ENCODE measurements at regions of chr16 and their contacts with region 1.

Region 1: GRCh38 chr16:4846891-4847773 is at the starts of genes GLYR1 and UBN1:
- DNase-seq: peak; percentile 98 to 100 (median 99)
- ATAC-seq: peak; percentile 90
- H3K4me3 ChIP-seq: peak within 1 kb of the TSS; percentile 95
- H3K4me3 Mint-ChIP-seq: peak within 1 kb of the TSS; percentile 93
- H3K27ac ChIP-seq: peak within 1 kb of the TSS; percentile 75 to 93
- H3K27ac Mint-ChIP-seq: peak within 1 kb of the TSS; percentile 85
- H3K4me1 ChIP-seq: peaks cover 46% of the 10 kb centered on the region
- H3K4me1 Mint-ChIP-seq: peaks cover 57% of the 10 kb centered on the region
- H3K27me3 ChIP-seq: no peaks in the 10 kb centered on the region
- H3K27me3 Mint-ChIP-seq: no peaks in the 10 kb centered on the region
- CTCF ChIP-seq: no peak
- total RNA-seq, gene GLYR1: 71.7 to 77.2 TPM
- total RNA-seq, gene UBN1: 45.7 to 45.8 TPM

Region 2: DNA sequence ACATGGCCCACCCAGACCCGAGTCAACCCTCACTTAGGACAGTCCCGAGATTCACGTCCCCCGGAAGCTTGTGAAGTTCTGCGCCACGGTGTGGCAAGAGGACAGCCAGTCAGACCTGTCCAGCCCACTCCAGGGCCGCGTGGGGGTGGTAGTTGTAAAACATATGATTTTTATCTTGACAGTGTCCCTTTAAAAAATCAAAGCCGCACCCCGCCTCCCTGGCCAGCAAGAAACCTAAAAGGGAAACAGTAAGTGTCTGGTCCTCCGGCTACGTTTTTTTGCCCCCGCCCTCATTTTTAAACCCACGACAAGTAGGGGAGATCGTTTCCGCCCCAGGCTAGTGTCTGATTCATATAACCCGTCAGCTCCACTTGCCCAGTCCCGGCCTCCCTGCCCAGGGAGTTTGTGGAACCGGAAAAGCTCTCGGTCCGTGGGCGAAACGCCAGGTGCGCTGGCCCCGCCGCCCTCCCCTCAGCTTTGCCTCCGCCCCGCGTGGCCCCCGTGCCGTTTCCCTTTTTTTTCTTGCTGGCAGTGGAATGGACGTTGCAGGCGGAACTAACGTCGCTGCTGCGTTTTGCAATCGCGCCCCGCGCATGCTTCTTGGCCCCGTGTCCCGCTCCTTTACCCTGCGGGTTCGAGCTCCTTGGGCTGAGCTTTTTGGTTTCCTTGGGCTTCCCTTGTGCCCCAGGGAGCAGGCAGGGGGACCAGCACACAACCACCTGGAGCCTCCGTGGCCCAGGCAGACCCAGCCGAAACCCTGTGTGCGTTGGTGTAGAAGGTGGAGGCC is 167.1 kb before region 1 on chr16:
- CTCF ChIA-PET with region 1: no interaction called
- POLR2A ChIA-PET with region 1: no interaction called
- intact Hi-C with region 1: no loop called
- DNase-seq: peak in 2 of 14 experiments; percentile 59 to 69
- ATAC-seq: no peak
- H3K4me3 ChIP-seq: no peak overlapping the region
- H3K4me3 Mint-ChIP-seq: peak overlapping the region; percentile 30
- H3K27ac ChIP-seq: no peak overlapping the region
- H3K27ac Mint-ChIP-seq: peak overlapping the region; percentile 42
- H3K4me1 ChIP-seq: peaks cover 54% of the 10 kb centered on the region
- H3K4me1 Mint-ChIP-seq: peaks cover 34% of the 10 kb centered on the region
- H3K27me3 ChIP-seq: no peaks in the 10 kb centered on the region
- H3K27me3 Mint-ChIP-seq: no peaks in the 10 kb centered on the region
- CTCF ChIP-seq: no peak

Region 3: DNA sequence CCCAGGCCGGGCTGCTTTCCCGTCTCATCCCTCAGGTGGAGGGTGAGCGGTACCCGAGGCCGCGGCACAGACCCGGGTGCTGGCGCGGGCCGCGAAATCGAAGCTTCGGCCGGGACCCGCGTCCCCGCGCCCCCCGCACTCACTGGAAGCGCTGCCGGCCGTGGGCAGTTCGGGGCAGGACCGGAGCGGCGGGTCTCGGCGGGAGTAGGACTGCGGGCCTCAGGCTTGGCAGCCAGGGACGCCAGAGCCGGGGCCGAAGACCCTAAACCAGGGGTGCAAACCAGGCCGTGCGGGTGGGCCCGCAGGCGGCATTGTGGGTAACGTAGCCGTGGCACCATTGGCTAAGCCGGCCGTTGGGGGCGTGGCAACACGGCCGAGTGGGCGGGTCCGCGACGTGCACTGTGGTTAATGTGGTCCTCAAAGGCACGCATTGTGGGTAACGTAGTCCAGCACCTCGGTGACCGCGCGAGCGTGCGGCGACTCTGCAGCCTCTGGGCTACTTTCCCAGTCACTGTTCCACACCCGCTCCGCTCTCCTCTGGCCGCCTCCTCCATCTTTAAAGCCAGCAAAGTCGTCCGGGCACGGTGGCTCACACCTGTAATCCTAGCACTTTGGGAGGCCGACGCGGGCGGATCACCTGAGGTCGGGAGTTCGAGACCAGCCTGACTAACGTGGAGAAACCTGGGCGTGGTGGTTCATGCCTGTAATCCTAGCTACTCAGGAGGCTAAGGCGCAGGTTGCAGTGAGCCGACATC is 80.1 kb before region 1 on chr16 and contains the start of gene ZNF500:
- CTCF ChIA-PET with region 1: no interaction called
- POLR2A ChIA-PET with region 1: interaction called, 5 read pairs
- intact Hi-C with region 1: loop called in 1 of 2 experiments (anchors 1 kb)
- DNase-seq: peak; percentile 90 to 99 (median 96)
- ATAC-seq: peak; percentile 90
- H3K4me3 ChIP-seq: peak within 1 kb of the TSS; percentile 80
- H3K4me3 Mint-ChIP-seq: peak within 1 kb of the TSS; percentile 96
- H3K27ac ChIP-seq: peak within 1 kb of the TSS; percentile 52 to 69
- H3K27ac Mint-ChIP-seq: peak within 1 kb of the TSS; percentile 90
- H3K4me1 ChIP-seq: peaks cover 41% of the 10 kb centered on the region
- H3K4me1 Mint-ChIP-seq: peaks cover 32% of the 10 kb centered on the region
- H3K27me3 ChIP-seq: no peaks in the 10 kb centered on the region
- H3K27me3 Mint-ChIP-seq: no peaks in the 10 kb centered on the region
- CTCF ChIP-seq: no peak
- total RNA-seq, gene ZNF500: 11.8 to 12.4 TPM

Region 4: DNA sequence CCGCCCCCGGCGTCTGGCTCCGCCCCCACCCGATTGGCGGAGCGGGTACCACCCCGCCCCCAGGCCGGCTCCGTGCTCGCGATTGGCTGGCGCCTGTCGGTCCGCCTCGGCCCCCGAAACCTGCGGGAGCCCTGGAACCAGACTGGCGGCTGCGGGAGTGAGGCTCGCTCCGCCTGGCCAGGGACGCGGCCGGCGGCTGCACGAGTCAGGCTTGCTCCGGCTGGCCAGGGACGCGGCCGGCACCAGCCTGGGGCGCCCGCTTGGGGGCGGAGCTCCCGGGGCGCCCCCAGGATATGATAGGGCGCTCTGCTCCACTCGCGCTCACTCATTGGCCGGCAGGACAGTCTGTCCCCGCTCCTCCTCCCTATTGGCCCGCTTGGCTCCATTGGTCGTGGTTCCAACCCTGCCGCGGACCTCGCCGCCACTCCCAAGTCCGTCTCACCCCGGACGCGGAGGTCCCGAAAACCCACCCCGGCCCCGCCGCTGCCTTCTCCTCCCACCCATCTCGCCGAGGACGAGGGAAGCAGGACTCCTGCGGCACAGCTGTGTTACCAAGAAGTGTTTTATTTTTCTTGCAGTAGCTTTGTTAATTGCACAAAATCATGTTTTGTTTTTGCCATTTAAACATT is 44.4 kb before region 1 on chr16:
- CTCF ChIA-PET with region 1: interaction called, 3 read pairs
- POLR2A ChIA-PET with region 1: interaction called, 11 read pairs
- intact Hi-C with region 1: loop called in 1 of 2 experiments (anchors 2 kb)
- DNase-seq: peak; percentile 76 to 93 (median 88)
- ATAC-seq: peak; percentile 83
- H3K4me3 ChIP-seq: peak overlapping the region; percentile 61
- H3K4me3 Mint-ChIP-seq: peak overlapping the region; percentile 92
- H3K27ac ChIP-seq: peak overlapping the region in 1 of 2 donors; percentile 56
- H3K27ac Mint-ChIP-seq: peak overlapping the region; percentile 96
- H3K4me1 ChIP-seq: peaks cover 24% of the 10 kb centered on the region
- H3K4me1 Mint-ChIP-seq: peaks cover 22% of the 10 kb centered on the region
- H3K27me3 ChIP-seq: no peaks in the 10 kb centered on the region
- H3K27me3 Mint-ChIP-seq: no peaks in the 10 kb centered on the region
- CTCF ChIP-seq: no peak

Region 5: DNA sequence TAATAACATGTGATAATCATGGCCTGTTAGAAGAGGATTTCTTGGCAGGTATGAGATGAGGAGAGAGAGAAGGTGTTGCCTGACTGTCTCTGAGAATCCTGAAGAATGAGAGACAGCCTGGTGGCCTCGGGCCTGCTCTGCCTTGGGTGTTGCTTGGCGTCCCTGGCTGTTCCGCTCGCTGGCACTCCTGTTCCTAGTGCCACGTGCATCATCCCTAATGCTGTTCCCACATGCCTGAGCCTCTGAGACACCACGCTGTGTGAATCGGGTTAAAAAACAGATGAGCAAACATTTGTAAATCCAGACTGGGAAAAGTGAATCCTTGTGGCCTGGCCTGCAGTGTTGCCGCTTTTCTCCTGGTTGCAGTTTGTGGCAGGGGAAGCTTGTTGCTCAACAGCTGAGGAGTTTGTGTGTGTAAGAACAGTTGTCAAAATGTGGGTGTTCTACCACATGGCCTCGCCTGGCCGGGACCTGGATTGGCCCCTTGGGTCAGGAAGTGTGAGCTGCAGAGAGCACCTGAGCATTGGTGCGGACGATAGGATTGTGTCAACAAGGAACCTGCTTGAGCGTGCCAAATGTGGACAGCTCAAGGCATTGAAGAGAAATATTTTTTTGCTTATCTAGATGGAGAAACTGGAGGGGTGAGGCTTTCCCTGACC is 22.1 kb after region 1 on chr16:
- CTCF ChIA-PET with region 1: no interaction called
- POLR2A ChIA-PET with region 1: no interaction called
- intact Hi-C with region 1: no loop called
- DNase-seq: no peak
- ATAC-seq: no peak
- H3K4me3 ChIP-seq: no peak overlapping the region
- H3K4me3 Mint-ChIP-seq: no peak overlapping the region
- H3K27ac ChIP-seq: no peak overlapping the region
- H3K27ac Mint-ChIP-seq: no peak overlapping the region
- H3K4me1 ChIP-seq: no peaks in the 10 kb centered on the region
- H3K4me1 Mint-ChIP-seq: peaks cover 21% of the 10 kb centered on the region
- H3K27me3 ChIP-seq: no peaks in the 10 kb centered on the region
- H3K27me3 Mint-ChIP-seq: no peaks in the 10 kb centered on the region
- CTCF ChIP-seq: no peak

Region 6: GRCh38 chr16:5033256-5034169 is 186.4 kb after region 1 on chr16 and contains the start of gene NAGPA:
- CTCF ChIA-PET with region 1: no interaction called
- POLR2A ChIA-PET with region 1: no interaction called
- intact Hi-C with region 1: loop called in 1 of 2 experiments (anchors 5 kb)
- DNase-seq: peak; percentile 72 to 90 (median 80)
- ATAC-seq: peak; percentile 90
- H3K4me3 ChIP-seq: peak within 1 kb of the TSS; percentile 73
- H3K4me3 Mint-ChIP-seq: peak within 1 kb of the TSS; percentile 86
- H3K27ac ChIP-seq: peak within 1 kb of the TSS; percentile 39 to 68
- H3K27ac Mint-ChIP-seq: peak within 1 kb of the TSS; percentile 84
- H3K4me1 ChIP-seq: peaks cover 19% of the 10 kb centered on the region
- H3K4me1 Mint-ChIP-seq: peaks cover 20% of the 10 kb centered on the region
- H3K27me3 ChIP-seq: no peaks in the 10 kb centered on the region
- H3K27me3 Mint-ChIP-seq: no peaks in the 10 kb centered on the region
- CTCF ChIP-seq: no peak
- total RNA-seq, gene NAGPA: 30.0 to 34.0 TPM

Region 7: DNA sequence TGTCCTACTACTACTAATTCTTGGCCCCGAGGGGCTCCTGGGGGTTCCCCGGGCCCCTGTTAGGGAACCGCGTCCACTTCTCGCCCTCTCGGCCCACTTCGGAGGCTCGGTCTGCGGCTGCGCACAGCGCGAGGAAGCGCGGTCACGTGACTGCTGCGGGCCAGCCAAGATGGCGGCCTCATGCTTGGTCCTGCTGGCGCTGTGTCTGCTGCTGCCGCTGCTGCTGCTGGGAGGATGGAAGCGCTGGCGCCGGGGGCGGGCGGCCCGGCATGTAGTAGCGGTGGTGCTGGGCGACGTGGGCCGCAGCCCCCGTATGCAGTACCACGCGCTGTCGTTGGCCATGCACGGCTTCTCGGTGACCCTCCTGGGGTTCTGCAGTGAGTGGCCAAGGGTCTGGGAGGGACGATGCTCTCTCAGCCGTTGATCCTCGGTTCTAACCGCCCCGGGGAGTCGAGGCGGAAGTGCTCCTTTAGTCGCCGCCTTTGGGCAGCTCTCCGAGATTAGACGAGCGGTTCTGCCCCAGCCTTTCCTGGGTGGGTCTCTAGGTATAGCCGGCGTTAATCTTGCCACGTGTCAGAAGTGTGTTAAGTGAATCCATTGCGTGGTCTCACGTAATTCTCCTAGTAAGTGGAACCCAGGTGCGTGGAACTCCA is 224.7 kb after region 1 on chr16 and contains the start of gene ALG1:
- CTCF ChIA-PET with region 1: no interaction called
- POLR2A ChIA-PET with region 1: no interaction called
- intact Hi-C with region 1: loop called in 1 of 2 experiments (anchors 10 kb)
- DNase-seq: peak; percentile 83 to 95 (median 87)
- ATAC-seq: peak; percentile 91
- H3K4me3 ChIP-seq: peak within 1 kb of the TSS; percentile 78
- H3K4me3 Mint-ChIP-seq: peak within 1 kb of the TSS; percentile 97
- H3K27ac ChIP-seq: peak within 1 kb of the TSS; percentile 83 to 91
- H3K27ac Mint-ChIP-seq: peak within 1 kb of the TSS; percentile 96
- H3K4me1 ChIP-seq: peaks cover 24% of the 10 kb centered on the region
- H3K4me1 Mint-ChIP-seq: peaks cover 35% of the 10 kb centered on the region
- H3K27me3 ChIP-seq: no peaks in the 10 kb centered on the region
- H3K27me3 Mint-ChIP-seq: no peaks in the 10 kb centered on the region
- CTCF ChIP-seq: no peak
- total RNA-seq, gene ALG1: 8.9 to 9.0 TPM